Mammary epithelial cell (primary cell): ENCODE measurements at regions of chr17 and their contacts with region 1.

Region 1: DNA sequence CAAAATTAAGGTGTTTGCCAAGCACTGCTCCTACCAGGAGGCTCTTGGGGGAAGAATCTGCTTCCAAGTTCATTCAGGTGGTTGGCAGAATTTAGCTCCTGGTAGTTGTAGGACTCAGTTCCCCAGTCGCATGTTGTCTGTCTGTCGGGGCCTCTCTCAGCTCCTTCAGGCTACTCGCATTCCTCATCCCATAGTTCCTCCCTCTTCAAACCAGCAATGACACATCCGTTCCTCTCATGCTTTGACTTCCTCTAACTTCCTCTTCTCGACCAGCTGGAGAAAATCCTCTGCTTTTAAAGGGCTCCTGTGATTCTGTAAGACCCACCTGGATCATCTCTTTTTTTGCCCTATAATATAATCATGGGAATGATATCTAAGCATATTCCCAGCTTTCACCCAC is 108.1 kb downstream of the PMP22 start:
- DNase-seq: no peak
- H3K4me3 ChIP-seq: no peak overlapping the region
- H3K27ac ChIP-seq: no peak overlapping the region
- H3K4me1 ChIP-seq: no peaks in the 10 kb centered on the region
- H3K27me3 ChIP-seq: peaks cover 2% of the 10 kb centered on the region
- CTCF ChIP-seq: no peak

Region 2: GRCh38 chr17:14886240-14886639 is 270.8 kb before region 1 on chr17:
- CTCF ChIA-PET with region 1: interaction called, 5 read pairs
- dilution Hi-C with region 1: no loop called
- in situ Hi-C with region 1: no loop called
- intact Hi-C with region 1: loop called (anchors 5 kb)
- DNase-seq: peak; percentile 44
- H3K4me3 ChIP-seq: no peak overlapping the region
- H3K27ac ChIP-seq: no peak overlapping the region
- H3K4me1 ChIP-seq: no peaks in the 10 kb centered on the region
- H3K27me3 ChIP-seq: no peaks in the 10 kb centered on the region
- CTCF ChIP-seq: peak; percentile 39 to 45

Region 3: DNA sequence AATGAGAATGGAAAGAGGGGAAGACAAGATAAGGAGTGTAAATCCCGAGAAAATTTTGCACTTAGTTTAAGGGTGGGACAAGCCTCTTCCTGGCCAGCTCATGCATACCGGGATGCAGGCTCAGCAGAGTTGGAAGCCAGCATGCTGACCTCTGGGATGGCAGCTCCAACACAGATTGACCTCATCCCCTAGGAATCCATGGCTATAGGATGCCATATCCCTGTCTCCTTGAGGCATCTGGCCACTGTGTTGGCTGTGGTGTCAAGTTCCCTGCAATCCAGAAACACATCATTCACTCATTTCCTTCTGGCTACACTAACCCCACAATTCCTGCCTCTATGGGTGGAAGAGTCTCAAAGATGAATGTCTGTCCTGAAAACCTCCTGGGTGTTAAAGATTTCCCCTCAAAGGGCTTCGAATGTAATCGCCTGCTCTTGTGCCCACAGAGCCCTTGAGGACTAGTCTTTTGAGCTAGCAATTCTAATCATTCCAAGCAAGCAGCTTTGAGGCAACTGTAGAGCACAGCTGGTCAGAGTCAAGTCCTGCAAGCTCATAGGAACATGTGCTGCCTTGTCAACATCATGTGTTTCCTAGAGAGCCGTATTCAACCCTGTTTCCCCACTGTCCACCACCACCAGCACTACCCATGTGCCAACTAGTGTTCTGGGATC is 33.3 kb before region 1 on chr17:
- CTCF ChIA-PET with region 1: no interaction called
- dilution Hi-C with region 1: no loop called
- in situ Hi-C with region 1: no loop called
- intact Hi-C with region 1: no loop called
- DNase-seq: no peak
- H3K4me3 ChIP-seq: no peak overlapping the region
- H3K27ac ChIP-seq: no peak overlapping the region
- H3K4me1 ChIP-seq: no peaks in the 10 kb centered on the region
- H3K27me3 ChIP-seq: no peaks in the 10 kb centered on the region
- CTCF ChIP-seq: no peak